ENCODE measurements at regions of chr5 and their contacts with region 1.

Region 1: DNA sequence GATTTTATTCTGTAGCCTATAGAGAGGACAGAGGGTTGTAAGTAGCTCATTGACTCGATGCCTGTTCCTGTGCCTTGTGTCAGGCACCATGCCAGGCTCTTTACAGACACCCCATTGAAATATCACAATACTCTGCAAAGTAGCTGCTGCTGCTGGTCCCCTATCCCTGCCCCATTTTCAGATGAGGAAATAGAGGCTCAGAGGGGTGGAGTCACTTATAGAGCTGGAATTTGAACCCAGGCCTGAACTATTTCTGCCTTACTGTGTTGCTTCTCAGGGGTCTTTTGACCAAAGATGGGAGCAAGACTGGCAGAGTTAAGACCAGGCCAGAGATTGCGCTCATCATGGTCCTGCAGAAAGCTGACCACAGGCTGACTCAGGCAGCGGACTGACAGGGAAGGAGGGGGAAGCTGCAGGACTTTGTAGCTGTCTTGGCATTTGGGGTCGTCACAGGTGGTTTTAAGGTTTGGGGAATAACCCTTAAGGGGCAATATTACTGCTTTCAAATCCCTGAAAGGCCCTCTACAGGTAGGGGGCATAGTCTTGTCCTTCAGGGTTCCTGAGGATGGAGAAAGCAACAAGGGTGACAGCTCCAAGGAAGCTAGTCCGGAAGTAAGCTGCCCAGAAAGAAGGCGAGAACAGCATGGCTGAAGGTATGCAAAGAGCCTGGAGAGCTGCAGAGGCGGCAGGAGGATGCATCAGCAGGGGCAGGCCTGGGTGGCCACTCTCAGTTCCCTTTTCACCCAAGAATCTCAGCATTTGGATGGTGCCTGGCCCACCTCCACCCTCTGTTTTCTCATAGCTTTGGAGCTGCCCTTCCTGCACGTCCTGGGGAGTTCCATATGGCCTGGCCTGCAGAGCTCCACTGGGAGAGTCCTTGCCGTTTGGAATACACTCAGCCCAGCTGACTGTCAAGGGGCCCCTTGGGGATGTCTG is 18.3 kb upstream of the NDST1 start:
- DNase-seq: no peak
- ATAC-seq: no peak
- H3K4me3 ChIP-seq: no peak overlapping the region; a peak in 1 of 4 replicates
- H3K27ac ChIP-seq: peak overlapping the region; percentile 95
- H3K4me1 ChIP-seq: peaks cover 72% of the 10 kb centered on the region
- H3K27me3 ChIP-seq: no peaks in the 10 kb centered on the region
- CTCF ChIP-seq: no peak

Region 2: GRCh38 chr5:150000256-150000989 is 489.2 kb before region 1 on chr5 and contains the starts of genes HMGXB3 and TIGD6:
- CTCF ChIA-PET with region 1: no interaction called
- POLR2A ChIA-PET with region 1: no interaction called
- in situ Hi-C with region 1: no loop called
- intact Hi-C with region 1: no loop called
- DNase-seq: peak; percentile 69
- ATAC-seq: peak; percentile 97
- H3K4me3 ChIP-seq: peak within 1 kb of the TSS; percentile 92 to 100
- H3K27ac ChIP-seq: peak within 1 kb of the TSS; percentile 97
- H3K4me1 ChIP-seq: peaks cover 17% of the 10 kb centered on the region
- H3K27me3 ChIP-seq: no peaks in the 10 kb centered on the region
- CTCF ChIP-seq: no peak
- total RNA-seq, gene HMGXB3: 56.2 TPM
- total RNA-seq, gene TIGD6: 7.1 TPM

Region 3: DNA sequence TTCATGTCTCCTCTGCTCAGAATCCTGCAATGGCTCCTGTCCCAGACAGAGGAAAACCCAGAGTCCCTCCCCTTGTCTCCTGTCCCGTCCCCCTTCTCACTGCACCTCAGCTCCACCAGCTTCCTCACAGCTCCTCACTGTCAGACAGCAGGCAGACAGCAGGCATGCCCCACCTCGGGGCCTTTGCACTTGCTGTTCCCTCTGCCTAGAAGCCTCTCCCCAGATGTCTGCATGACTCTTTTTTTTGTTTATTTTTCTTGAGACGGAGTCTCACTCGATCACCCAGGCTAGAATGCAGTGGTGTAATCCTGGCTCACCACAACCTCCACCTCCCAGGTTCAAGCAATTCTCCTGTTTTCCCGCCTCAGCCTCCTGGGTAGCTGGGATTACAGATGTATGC is 308.6 kb before region 1 on chr5:
- CTCF ChIA-PET with region 1: no interaction called
- POLR2A ChIA-PET with region 1: no interaction called
- in situ Hi-C with region 1: no loop called
- intact Hi-C with region 1: no loop called
- DNase-seq: no peak
- ATAC-seq: no peak
- H3K4me3 ChIP-seq: no peak overlapping the region
- H3K27ac ChIP-seq: no peak overlapping the region
- H3K4me1 ChIP-seq: no peaks in the 10 kb centered on the region
- H3K27me3 ChIP-seq: no peaks in the 10 kb centered on the region
- CTCF ChIP-seq: no peak

Region 4: DNA sequence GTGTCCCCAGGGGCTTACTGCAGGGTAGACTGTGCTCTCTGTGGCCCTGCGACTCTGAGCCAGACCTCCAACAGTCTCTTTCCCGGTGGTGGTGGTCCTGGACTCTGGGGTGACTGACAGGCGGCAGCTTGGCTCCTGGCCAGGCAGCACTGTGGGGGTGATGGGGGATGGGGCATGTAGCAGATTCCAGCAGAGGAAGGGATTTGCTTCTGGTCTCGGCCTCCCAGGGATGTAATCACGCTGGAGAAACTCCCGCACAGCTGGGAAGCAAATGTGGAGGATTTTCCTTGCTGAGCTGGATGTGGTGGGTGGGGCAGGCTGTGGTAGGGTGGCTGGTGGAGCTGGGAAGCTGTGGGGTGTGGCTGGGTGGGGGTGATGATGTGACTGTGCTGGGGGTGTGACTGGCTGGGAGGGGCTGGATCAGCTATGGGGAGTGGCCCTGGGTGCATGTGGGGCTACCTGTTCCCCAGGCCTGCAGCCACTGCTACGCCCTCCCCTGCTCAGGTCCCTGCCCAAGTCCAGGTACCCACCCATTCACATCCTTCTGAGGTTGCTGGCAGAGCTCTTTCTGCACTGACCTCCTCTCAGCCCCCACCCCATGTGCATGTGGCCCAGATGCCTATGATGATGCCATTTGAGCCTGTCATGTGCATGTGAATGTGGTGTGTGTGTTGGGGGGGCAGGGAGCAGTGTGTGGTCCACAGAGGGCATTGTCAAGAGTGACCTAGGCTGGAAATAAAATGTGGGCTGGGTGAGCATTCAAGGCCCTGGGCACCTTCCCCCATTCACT is 22.1 kb after region 1 on chr5:
- CTCF ChIA-PET with region 1: interaction called, 14 read pairs
- POLR2A ChIA-PET with region 1: interaction called, 3 read pairs
- in situ Hi-C with region 1: no loop called
- intact Hi-C with region 1: no loop called
- DNase-seq: no peak
- ATAC-seq: peak; percentile 40
- H3K4me3 ChIP-seq: no peak overlapping the region
- H3K27ac ChIP-seq: peak overlapping the region; percentile 76
- H3K4me1 ChIP-seq: peaks cover 85% of the 10 kb centered on the region
- H3K27me3 ChIP-seq: no peaks in the 10 kb centered on the region
- CTCF ChIP-seq: no peak

Region 5: GRCh38 chr5:151696470-151697061 is 1206.9 kb after region 1 on chr5:
- CTCF ChIA-PET with region 1: interaction called, 11 read pairs
- POLR2A ChIA-PET with region 1: no interaction called
- in situ Hi-C with region 1: no loop called
- intact Hi-C with region 1: no loop called
- DNase-seq: no peak
- ATAC-seq: peak; percentile 42
- H3K4me3 ChIP-seq: peak overlapping the region in 1 of 2 experiments; percentile 7; a peak in 1 of 4 replicates
- H3K27ac ChIP-seq: peak overlapping the region; percentile 72
- H3K4me1 ChIP-seq: peaks cover 51% of the 10 kb centered on the region
- H3K27me3 ChIP-seq: no peaks in the 10 kb centered on the region
- CTCF ChIP-seq: no peak

Measured in Panc1 (cell line).